Colonic mucosa (tissue), 4 donors: ENCODE measurements at regions of chr4 and their contacts with region 1.

Region 1: GRCh38 chr4:74932816-74933561 is at the start of gene PARM1:
- DNase-seq: peak; percentile 97
- H3K4me3 ChIP-seq: peak within 1 kb of the TSS; percentile 80
- H3K27ac ChIP-seq: peak within 1 kb of the TSS; percentile 97
- H3K4me1 ChIP-seq: no peaks in the 10 kb centered on the region
- H3K27me3 ChIP-seq: no peaks in the 10 kb centered on the region
- CTCF ChIP-seq: peak; percentile 63
- total RNA-seq, gene PARM1: 165 to 280 TPM

Region 2: DNA sequence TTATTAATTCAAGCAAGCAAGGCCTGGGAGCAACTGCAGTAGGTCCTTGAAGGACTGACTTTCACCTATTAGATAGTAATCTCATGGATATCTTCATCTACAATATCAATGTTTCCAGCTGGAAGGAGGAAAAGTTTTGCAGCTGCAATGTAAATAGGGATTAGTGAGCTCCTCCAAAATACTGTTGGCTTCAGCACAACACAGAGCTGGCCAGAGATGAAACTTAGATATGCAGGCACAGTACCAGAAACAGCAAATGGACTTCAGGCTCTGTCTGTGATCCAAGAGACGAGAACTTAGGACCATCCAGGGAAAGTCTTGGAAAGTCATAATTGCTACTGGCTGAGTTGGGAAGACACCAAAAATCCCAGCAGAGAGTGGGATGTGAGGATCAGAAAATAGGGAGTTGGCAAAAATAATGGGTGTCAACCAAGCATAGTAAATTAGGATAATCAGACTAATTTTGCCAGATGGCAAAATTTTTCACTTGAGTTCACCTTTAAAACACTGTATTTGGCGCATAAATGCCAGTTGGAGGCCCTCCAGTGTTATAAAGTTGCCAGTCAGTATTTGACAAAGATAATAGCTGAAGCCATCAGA is 57.4 kb after region 1 on chr4:
- intact Hi-C with region 1: no loop called
- DNase-seq: no peak
- H3K4me3 ChIP-seq: no peak overlapping the region
- H3K27ac ChIP-seq: no peak overlapping the region
- H3K4me1 ChIP-seq: no peaks in the 10 kb centered on the region
- H3K27me3 ChIP-seq: no peaks in the 10 kb centered on the region
- CTCF ChIP-seq: no peak

Region 3: DNA sequence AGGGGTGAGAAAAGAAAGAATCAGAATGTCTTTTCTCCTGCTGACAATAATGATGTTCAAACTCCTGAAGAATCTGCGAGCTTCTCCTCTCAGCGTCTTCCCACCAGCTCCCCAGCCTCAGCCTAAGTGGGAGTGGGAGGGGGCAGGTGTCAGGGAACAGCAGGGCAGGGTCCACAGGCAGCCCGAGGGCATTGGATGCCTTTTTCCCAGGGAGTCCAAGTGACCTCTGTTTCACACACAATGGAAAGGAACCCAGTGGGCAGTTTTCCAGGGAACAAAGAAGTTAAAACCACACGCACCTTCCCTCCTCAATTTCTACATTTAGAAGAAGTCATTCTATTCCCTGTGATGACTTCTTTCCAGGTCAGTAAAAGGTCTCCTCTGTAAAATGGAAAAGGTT is 278.4 kb after region 1 on chr4:
- intact Hi-C with region 1: no loop called
- DNase-seq: no peak
- H3K4me3 ChIP-seq: no peak overlapping the region
- H3K27ac ChIP-seq: no peak overlapping the region
- H3K4me1 ChIP-seq: no peaks in the 10 kb centered on the region
- H3K27me3 ChIP-seq: no peaks in the 10 kb centered on the region
- CTCF ChIP-seq: no peak

Region 4: DNA sequence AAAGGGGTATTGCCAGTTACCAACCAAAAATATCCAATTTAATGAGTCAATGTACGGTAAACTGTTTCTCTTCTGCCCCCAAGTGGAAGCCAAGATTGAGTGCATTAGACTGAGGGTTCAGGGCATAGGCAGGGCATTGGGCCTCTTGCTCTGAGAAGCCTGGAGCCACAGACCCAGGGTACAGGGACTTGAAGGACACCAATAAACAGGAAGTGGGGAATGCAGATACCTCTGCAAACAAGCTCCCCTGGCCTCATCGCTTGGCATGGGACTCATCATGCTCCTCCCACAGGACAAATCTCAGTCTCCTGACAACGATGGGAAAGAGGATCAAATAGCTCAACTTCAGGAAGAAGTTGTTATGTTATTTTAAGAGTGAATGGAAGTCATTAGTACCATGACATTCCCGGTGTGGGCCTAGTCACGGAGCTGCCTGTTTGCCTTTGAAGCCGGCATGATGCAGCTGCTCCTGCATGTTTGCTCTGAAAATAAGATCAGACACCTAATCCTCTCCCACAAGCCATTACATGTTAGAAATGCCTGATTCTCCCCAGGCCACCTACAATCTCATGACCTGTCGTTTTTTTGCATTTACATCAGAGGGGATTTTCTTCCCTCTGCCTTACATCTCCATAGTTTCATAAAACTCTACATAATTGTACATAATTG is 357.1 kb after region 1 on chr4:
- intact Hi-C with region 1: loop called (anchors 2 kb)
- DNase-seq: peak; percentile 44
- H3K4me3 ChIP-seq: no peak overlapping the region
- H3K27ac ChIP-seq: no peak overlapping the region
- H3K4me1 ChIP-seq: no peaks in the 10 kb centered on the region
- H3K27me3 ChIP-seq: no peaks in the 10 kb centered on the region
- CTCF ChIP-seq: peak; percentile 45

Region 5: DNA sequence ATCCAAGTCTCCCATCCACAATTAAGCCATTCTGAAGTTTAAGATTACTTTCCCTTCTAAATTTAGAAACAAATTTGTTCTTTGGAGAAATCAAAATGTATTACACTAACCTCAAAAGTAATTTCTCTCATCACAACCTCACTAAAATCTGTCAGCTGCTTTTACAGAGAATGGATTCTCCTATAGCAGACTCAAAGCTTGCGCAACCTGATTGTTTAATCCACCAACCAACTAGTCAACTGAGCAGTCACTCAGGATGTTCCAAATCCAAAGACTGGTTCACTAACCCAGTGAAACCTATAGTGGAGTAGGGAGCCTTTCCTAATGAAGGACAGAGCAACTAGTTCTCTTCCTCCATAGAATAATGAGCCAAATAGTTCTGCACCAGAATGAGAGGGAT is 536.9 kb after region 1 on chr4:
- intact Hi-C with region 1: loop called (anchors 5 kb)
- DNase-seq: no peak
- H3K4me3 ChIP-seq: no peak overlapping the region
- H3K27ac ChIP-seq: no peak overlapping the region
- H3K4me1 ChIP-seq: no peaks in the 10 kb centered on the region
- H3K27me3 ChIP-seq: no peaks in the 10 kb centered on the region
- CTCF ChIP-seq: no peak

Region 6: GRCh38 chr4:75490155-75490554 is 557.2 kb after region 1 on chr4:
- intact Hi-C with region 1: loop called (anchors 10 kb)
- DNase-seq: no peak
- H3K4me3 ChIP-seq: no peak overlapping the region
- H3K27ac ChIP-seq: no peak overlapping the region
- H3K4me1 ChIP-seq: no peaks in the 10 kb centered on the region
- H3K27me3 ChIP-seq: no peaks in the 10 kb centered on the region
- CTCF ChIP-seq: peak; percentile 23